ENCODE measurements at regions of chr6 and their contacts with region 1.

Region 1: DNA sequence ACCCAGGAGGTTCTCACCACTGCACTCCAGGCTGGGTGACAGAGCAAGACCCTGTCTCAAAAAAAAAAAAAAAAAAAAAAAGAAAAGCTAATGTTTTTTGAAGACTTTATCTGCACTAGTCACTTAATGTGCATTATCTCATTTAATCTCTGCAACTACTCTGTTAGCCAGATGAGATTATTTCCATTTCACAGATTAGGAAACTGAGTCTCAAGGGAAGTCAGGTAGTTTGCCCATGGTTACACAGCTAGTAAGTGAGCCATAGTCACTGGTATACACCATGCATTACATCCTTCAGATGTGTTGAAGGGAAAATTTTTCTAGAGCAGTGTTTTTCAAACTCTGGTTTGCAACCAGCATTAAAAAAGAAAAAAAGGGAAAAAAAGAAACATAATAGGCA is 7.2 kb upstream of the SRF start:
- DNase-seq: no peak
- ATAC-seq: no peak
- H3K4me3 ChIP-seq: no peak overlapping the region
- H3K27ac ChIP-seq: no peak overlapping the region
- H3K4me1 ChIP-seq: no peaks in the 10 kb centered on the region
- H3K27me3 ChIP-seq: no peaks in the 10 kb centered on the region
- CTCF ChIP-seq: no peak

Region 2: GRCh38 chr6:43053545-43054205 is 110.2 kb before region 1 on chr6 and contains the start of gene CUL7:
- CTCF ChIA-PET with region 1: no interaction called
- POLR2A ChIA-PET with region 1: interaction called, 11 read pairs
- intact Hi-C with region 1: no loop called
- DNase-seq: peak; percentile 98
- ATAC-seq: peak; percentile 98
- H3K4me3 ChIP-seq: peak within 1 kb of the TSS; percentile 74
- H3K27ac ChIP-seq: peak within 1 kb of the TSS; percentile 69
- H3K4me1 ChIP-seq: peaks cover 28% of the 10 kb centered on the region
- H3K27me3 ChIP-seq: no peaks in the 10 kb centered on the region
- CTCF ChIP-seq: no peak
- total RNA-seq, gene CUL7: 17.5 and 18.6 TPM in 2 replicates